Posterior vena cava (tissue), 2 donors: ENCODE measurements at regions of chr2 and their contacts with region 1.

Region 1: DNA sequence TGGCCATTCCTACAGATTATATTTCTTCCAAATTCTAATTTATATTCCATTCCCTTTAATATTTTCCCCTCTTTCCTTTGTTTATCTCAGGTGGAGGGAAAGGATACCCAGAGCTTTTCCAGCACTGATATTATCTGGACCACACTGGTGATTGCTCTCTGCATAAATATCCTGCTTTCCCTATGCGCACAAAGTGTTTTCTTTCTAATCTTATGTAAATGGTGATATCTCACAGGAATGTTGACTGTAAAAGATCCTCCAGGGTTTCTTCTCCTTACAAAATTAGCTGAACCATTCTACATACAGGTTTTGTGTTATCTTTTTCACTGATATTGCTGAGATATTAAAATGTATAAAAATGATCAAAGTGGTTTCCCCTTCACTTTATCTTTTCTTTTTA is 59.1 kb upstream of the GALNT13 start:
- DNase-seq: no peak

Region 2: DNA sequence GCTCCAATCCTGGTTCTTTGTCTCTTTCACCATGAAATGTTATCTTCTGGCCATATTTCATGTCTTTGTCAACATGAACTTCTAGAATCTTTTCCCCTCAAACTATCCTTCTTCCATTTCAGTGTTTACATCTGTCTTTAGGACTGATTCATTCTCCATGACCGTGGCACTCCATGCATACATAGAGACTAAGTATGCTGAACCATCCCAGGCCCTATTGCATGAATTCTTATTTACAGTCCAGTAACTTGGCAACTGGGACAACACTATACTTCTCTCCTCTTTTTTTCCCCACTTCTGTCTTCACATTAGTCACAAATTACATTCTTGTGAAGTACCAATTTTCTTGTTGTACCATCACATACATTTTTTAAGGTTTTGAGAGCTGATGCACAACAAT is 50.7 kb before region 1 on chr2:
- intact Hi-C with region 1: loop called in 1 of 2 experiments (anchors 2 kb)
- DNase-seq: no peak

Region 3: DNA sequence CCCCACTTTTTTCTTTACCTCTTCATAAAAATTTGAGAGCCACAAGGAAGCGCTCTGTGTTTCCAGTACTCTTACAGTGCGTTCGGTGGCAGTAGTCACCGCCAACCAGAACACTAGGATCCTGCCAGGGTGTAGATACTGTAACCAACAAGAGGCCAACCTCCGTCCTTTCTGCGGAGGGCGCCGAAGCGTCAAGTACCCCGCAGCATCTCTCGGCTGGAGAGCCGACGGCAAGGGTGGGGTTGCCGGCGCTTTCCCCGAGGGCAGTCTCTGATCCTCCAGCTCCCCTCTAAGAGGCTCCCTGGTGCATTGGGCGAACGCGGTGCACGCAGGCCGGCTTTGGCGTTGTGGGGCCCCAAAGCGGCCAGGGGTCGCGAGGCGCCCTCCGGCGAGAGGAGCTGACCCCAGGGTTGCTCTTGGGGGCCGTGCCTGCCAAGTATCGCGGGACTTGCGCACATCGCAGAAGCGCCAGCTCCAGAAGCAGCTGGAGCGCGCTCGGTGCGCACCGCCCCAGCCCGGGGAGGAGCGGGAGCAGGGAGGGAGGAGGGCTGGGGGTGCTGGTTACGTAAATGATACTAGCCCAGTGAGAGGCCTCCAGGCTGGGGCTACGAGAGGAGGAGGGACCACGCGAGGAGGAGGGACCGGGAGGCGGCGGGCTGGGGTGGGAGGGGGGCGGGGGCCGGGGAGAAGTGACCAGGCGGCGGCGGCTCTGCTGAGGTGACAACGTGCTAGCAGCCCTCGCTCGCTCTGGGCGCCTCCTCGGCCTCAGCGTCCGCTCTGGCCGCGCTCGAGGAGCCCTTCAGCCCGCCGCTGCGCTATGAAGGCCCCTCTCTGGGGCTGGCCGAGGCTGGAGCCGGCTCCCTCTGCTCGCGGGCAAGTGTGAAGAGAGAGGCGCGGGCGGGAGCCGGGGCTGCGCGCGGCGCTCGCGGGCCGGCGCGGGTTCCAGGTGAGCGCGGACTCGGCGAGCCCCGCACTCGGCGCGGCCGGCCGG is 58.9 kb after region 1 on chr2 and contains the start of gene GALNT13:
- intact Hi-C with region 1: no loop called
- DNase-seq: peak; percentile 86
- total RNA-seq, gene GALNT13: 6.0 to 6.2 TPM

Region 4: GRCh38 chr2:154125891-154126290 is 313.3 kb after region 1 on chr2:
- intact Hi-C with region 1: no loop called
- DNase-seq: no peak